IMR-90 (cell line): ENCODE measurements at regions of chr15 and their contacts with region 1.

Region 1: DNA sequence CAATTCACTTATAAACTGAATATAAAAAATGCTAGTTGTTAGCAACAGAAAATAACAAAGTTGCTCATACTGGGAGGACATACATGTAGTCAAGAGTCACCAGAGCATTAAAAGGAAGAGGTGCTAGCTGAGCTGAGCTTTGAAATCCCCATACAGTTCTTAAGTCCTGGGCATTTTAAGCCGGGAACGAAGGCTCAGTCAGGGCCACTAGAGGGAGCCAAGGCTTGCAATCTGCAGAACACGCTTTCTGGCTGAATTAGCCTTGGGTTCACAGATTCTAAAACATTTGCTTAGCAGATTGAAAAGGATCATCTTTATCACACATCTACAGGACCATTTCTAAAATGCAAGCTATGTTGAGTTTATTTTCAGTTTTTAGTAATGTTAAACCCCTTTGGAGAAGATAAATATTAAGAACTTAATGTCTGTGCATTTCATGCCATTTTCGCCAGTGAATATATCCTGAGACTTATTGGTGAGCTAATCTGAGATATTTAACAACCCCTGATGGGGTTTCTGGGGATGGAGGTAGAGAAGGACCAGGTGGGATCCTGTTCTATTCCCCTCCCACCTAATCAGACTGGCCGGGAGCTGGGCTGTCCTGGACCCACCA is 26.3 kb upstream of the MNS1 start:
- DNase-seq: peak; percentile 81
- ATAC-seq: peak; percentile 94
- H3K4me3 ChIP-seq: no peak overlapping the region
- H3K27ac ChIP-seq: no peak overlapping the region
- H3K4me1 ChIP-seq: no peaks in the 10 kb centered on the region
- H3K27me3 ChIP-seq: peaks cover 33% of the 10 kb centered on the region
- CTCF ChIP-seq: peak; percentile 88
- POLR2A ChIP-seq: no peak
- RAD21 ChIP-seq: peak; percentile 92

Region 2: GRCh38 chr15:56869573-56869972 is 378.4 kb after region 1 on chr15:
- CTCF ChIA-PET with region 1: interaction called, 10 read pairs
- POLR2A ChIA-PET with region 1: no interaction called
- dilution Hi-C with region 1: no loop called
- in situ Hi-C with region 1: no loop called
- intact Hi-C with region 1: loop called (anchors 1 kb)
- DNase-seq: no peak
- ATAC-seq: no peak
- H3K4me3 ChIP-seq: no peak overlapping the region
- H3K27ac ChIP-seq: no peak overlapping the region
- H3K4me1 ChIP-seq: peaks cover 7% of the 10 kb centered on the region
- H3K27me3 ChIP-seq: no peaks in the 10 kb centered on the region
- CTCF ChIP-seq: peak; percentile 52
- POLR2A ChIP-seq: no peak
- RAD21 ChIP-seq: peak; percentile 65

Region 3: GRCh38 chr15:57138349-57138788 is 647.2 kb after region 1 on chr15:
- CTCF ChIA-PET with region 1: interaction called, 6 read pairs
- POLR2A ChIA-PET with region 1: no interaction called
- dilution Hi-C with region 1: loop called (anchors 25 kb)
- in situ Hi-C with region 1: loop called (anchors 10 kb)
- intact Hi-C with region 1: no loop called
- DNase-seq: peak; percentile 82
- ATAC-seq: peak; percentile 85
- H3K4me3 ChIP-seq: no peak overlapping the region
- H3K27ac ChIP-seq: no peak overlapping the region
- H3K4me1 ChIP-seq: peaks cover 3% of the 10 kb centered on the region; the same call in 1 of the 2 replicates
- H3K27me3 ChIP-seq: no peaks in the 10 kb centered on the region
- CTCF ChIP-seq: peak; percentile 72
- POLR2A ChIP-seq: no peak
- RAD21 ChIP-seq: peak; percentile 70

Region 4: GRCh38 chr15:57213862-57214261 is 722.6 kb after region 1 on chr15:
- CTCF ChIA-PET with region 1: interaction called, 4 read pairs
- POLR2A ChIA-PET with region 1: no interaction called
- dilution Hi-C with region 1: no loop called
- in situ Hi-C with region 1: loop called (anchors 10 kb)
- intact Hi-C with region 1: loop called (anchors 2 kb)
- DNase-seq: peak; percentile 67
- ATAC-seq: peak; percentile 48
- H3K4me3 ChIP-seq: no peak overlapping the region
- H3K27ac ChIP-seq: peak overlapping the region; percentile 23; the same call in 1 of the 2 replicates
- H3K4me1 ChIP-seq: peaks cover 13% of the 10 kb centered on the region
- H3K27me3 ChIP-seq: no peaks in the 10 kb centered on the region
- CTCF ChIP-seq: peak; percentile 71
- POLR2A ChIP-seq: no peak
- RAD21 ChIP-seq: peak; percentile 83

Region 5: GRCh38 chr15:57306161-57306943 is 815.1 kb after region 1 on chr15:
- CTCF ChIA-PET with region 1: interaction called, 8 read pairs
- POLR2A ChIA-PET with region 1: no interaction called
- dilution Hi-C with region 1: no loop called
- in situ Hi-C with region 1: loop called (anchors 10 kb)
- intact Hi-C with region 1: loop called (anchors 2 kb)
- DNase-seq: peak; percentile 28
- ATAC-seq: peak; percentile 92
- H3K4me3 ChIP-seq: peak overlapping the region; percentile 23; the same call in 1 of the 2 replicates
- H3K27ac ChIP-seq: peak overlapping the region; percentile 19
- H3K4me1 ChIP-seq: peaks cover 16% of the 10 kb centered on the region; the same call in 1 of the 2 replicates
- H3K27me3 ChIP-seq: no peaks in the 10 kb centered on the region
- CTCF ChIP-seq: peak; percentile 79
- POLR2A ChIP-seq: no peak
- RAD21 ChIP-seq: peak; percentile 76